ENCODE measurements at regions of chr5 and their contacts with region 1.

Region 1: DNA sequence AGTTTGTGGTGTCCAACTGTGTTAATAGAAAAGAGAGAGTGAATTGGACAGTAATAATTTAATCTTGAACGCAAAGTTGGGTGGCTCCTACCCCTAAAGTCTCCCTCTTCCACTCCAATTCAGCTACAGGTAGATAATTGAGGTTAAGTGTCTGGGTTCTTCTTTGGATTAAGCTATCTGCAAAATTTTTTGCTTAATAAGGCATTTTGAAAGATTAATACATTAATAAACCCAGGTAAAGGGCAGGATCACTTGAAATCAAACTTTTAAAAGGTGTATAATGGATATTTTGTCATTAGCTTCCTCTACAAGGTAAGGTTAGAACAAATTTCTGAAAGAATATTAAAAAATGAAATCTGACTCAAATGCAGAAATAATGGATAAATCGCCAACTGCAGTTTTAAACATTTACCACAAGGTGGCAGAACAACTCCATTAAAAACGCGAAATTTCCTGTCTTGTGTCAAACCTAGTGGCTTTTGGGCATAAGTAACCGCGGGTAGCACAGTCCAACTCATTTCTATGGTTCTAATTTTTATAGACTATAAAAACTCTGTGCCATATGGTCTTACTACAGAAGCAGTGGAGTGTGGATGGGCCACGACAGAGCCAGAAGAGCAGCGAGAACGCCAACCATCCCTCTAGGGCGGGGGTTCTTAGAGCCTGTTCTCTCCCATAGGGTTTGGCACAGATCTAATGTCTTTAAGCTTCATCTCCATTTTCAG is 276.5 kb downstream of the ARHGEF28 start:
- DNase-seq: no peak
- H3K4me3 Mint-ChIP-seq: no peak overlapping the region
- H3K27ac Mint-ChIP-seq: no peak overlapping the region
- H3K4me1 Mint-ChIP-seq: peaks cover 14% of the 10 kb centered on the region
- H3K27me3 Mint-ChIP-seq: peaks cover 38% of the 10 kb centered on the region

Region 2: DNA sequence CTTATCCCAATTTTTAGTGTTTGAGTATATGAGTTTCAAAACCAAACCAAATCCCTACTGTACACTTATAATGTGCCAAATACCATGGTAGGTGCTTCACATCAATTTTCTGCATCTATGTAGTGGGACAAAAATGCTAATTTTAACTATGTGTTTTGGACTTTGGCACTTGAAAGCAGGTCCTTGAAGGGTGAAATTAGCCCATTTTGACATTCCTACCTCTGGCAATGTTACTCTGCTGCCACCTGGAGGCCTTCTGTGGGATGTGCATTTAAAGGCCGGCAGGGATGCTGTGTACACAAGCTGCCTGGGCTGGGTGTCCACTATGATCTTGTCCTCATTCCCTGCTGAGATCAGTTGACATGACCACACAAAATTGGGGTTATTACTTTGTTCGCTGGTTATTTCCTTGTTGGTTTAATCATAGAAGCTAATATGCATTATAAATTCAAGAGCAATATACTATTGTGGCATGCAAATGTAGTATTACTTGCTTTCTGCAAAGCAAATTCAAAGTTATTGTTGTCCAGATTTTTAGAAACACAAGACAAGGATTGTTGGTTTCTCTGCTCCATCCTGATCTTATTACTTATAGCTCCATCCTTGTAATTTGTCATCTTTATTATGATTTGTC is 109.7 kb before region 1 on chr5:
- intact Hi-C with region 1: loop called (anchors 5 kb)
- DNase-seq: peak; percentile 43
- H3K4me3 Mint-ChIP-seq: no peak overlapping the region
- H3K27ac Mint-ChIP-seq: no peak overlapping the region
- H3K4me1 Mint-ChIP-seq: peaks cover 11% of the 10 kb centered on the region
- H3K27me3 Mint-ChIP-seq: peaks cover 4% of the 10 kb centered on the region

Region 3: DNA sequence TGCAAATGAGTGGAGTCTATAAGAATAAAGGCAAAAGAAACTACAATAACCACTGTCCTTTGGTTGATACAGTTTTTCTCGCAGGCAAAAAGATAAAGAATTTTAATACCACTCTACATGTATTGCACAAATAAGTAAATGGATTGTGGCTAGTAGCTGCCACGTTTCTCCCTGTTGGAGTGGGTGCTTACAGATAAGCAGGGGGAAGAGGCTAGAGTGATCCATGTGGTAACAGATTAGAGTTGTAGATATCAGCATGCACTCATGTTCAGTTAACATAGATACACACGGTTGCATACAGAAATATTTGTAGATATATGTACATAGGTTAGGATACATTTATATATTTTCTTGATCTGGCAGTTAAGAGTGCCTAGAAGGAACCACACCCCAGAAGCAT is 97.0 kb before region 1 on chr5:
- intact Hi-C with region 1: no loop called
- DNase-seq: no peak
- H3K4me3 Mint-ChIP-seq: no peak overlapping the region
- H3K27ac Mint-ChIP-seq: no peak overlapping the region
- H3K4me1 Mint-ChIP-seq: no peaks in the 10 kb centered on the region
- H3K27me3 Mint-ChIP-seq: peaks cover 16% of the 10 kb centered on the region

Region 4: GRCh38 chr5:74648835-74649293 is 746.4 kb after region 1 on chr5:
- intact Hi-C with region 1: loop called (anchors 1 kb)
- DNase-seq: peak; percentile 26
- H3K4me3 Mint-ChIP-seq: no peak overlapping the region
- H3K27ac Mint-ChIP-seq: no peak overlapping the region
- H3K4me1 Mint-ChIP-seq: peaks cover 10% of the 10 kb centered on the region
- H3K27me3 Mint-ChIP-seq: peaks cover 41% of the 10 kb centered on the region

Region 5: GRCh38 chr5:74919487-74919886 is 1017.0 kb after region 1 on chr5:
- intact Hi-C with region 1: loop called (anchors 1 kb)
- DNase-seq: no peak
- H3K4me3 Mint-ChIP-seq: no peak overlapping the region
- H3K27ac Mint-ChIP-seq: no peak overlapping the region
- H3K4me1 Mint-ChIP-seq: no peaks in the 10 kb centered on the region
- H3K27me3 Mint-ChIP-seq: peaks cover 4% of the 10 kb centered on the region

Region 6: DNA sequence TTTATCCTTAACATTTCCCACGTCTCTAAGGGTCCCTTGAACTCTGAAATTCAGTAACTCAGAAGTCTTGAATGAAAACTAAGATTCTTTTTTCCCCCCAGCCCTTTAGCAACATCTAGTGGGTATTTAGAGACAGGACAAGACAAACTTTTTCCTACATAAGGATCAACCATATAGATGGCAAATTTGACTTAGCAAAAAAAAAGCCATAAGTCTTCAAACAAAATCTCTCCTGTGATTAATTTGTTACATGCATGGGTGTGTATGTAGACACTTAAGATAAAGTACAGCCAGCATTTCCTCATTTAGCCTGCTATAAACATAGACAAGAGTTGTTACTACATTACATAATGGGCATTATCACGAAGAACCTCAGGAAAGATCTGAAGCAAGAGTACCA is 1363.2 kb after region 1 on chr5:
- intact Hi-C with region 1: loop called (anchors 2 kb)
- DNase-seq: no peak
- H3K4me3 Mint-ChIP-seq: no peak overlapping the region
- H3K27ac Mint-ChIP-seq: no peak overlapping the region
- H3K4me1 Mint-ChIP-seq: no peaks in the 10 kb centered on the region
- H3K27me3 Mint-ChIP-seq: peaks cover 5% of the 10 kb centered on the region

Measured in activated T-helper 1 cell treated with anti-CD3 and anti-CD28 coated beads, Interleukin-12 subunit alpha, Interleukin-12 subunit beta, Interleukin-2, Interleukin-4 antibody, amounts not matched to agents 30 ng/mL and 10 ng/mL and 1 ng/mL, durations not matched to agents 14 hours and 24 hours and 36 hours (primary cell).